ENCODE measurements at regions of chr2 and their contacts with region 1.

Region 1: DNA sequence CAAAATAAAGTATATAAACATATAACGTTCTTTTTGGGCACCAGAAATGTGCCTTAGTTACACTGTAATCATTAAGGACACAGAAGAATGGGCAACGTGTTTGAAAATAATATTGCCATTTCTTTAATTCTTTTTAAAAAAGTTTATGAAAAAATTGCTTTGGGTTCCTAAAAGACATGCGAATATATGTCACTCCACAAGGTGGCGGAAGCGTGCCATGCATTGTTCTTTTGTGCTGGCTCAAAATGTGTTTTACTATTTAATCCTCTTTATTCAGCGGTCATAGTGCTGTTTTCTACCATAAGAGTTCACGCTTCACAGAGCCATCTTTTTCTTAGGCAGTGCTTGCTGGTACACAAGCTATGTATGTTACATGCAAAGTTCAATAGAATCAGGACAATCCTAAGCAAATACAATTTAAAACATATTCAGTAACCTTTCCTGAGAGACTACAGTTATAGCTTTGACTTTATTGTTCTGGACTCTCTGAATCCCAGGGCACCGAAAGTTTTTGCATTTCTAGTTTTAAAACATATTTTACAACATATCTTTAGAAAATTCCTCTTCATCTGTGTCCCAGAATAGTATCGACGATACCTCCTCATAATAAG is 147.8 kb upstream of the ERBB4 start:
- DNase-seq: peak; percentile 33
- ATAC-seq: no peak
- H3K4me3 ChIP-seq: no peak overlapping the region
- H3K27ac ChIP-seq: no peak overlapping the region
- H3K4me1 ChIP-seq: no peaks in the 10 kb centered on the region
- H3K27me3 ChIP-seq: no peaks in the 10 kb centered on the region
- CTCF ChIP-seq: peak; percentile 85; the same call in 1 of the 2 replicates

Region 2: DNA sequence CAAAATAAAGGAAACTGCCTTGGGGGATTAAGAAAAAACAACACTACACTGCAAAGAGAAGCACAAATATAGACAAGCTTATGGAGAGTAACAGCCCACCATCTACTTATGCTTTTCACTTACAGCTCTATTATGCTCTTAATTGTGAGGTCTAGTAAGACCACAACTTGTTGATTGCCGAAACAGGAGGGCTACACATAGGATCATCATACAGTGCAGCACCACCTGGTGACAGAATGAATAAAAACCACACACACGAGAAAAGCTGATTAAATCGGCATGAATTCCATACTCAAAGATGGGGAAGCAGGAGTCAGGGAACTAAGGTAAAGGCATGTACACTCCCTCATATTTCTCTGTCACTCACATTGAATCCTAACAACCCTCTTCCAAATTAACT is 205.8 kb after region 1 on chr2:
- CTCF ChIA-PET with region 1: no interaction called
- POLR2A ChIA-PET with region 1: no interaction called
- in situ Hi-C with region 1: no loop called
- intact Hi-C with region 1: loop called (anchors 2 kb)
- DNase-seq: no peak
- ATAC-seq: no peak
- H3K4me3 ChIP-seq: no peak overlapping the region
- H3K27ac ChIP-seq: no peak overlapping the region
- H3K4me1 ChIP-seq: no peaks in the 10 kb centered on the region
- H3K27me3 ChIP-seq: no peaks in the 10 kb centered on the region
- CTCF ChIP-seq: peak; percentile 35

Region 3: DNA sequence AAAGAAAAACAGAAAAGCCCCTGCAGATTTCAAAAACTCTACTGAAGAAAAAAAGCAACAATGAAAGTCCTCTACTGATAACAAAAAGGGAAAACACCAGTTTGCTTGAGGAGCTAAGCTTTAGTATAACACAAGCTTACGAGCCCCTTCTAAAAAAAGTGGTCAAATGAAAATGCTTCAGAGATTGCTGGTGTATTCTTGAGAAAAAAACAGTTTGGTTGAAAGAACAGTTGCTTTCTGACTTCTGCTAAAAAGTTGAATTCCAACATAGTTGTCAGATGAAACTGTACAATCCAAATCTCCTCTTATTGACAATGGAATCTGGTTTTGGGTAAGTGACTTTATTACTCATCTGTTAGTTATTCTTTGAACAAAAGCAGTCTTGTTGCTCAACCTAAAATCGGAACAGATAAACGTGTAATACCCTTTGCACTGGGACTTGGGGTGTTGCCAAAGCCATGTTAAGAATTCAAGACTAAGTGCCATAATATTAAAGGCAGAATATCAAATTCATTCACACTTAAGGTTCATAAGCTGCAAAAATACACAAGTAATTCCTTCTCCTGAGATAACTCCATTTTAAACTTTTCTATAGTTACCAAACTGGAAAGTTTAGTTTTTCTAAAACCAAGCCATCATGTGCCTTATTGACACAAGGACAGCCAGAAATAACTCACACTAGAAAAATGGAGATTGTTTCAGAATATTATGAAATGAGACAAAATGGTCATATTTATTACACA is 552.5 kb after region 1 on chr2:
- CTCF ChIA-PET with region 1: no interaction called
- POLR2A ChIA-PET with region 1: no interaction called
- in situ Hi-C with region 1: no loop called
- intact Hi-C with region 1: loop called (anchors 10 kb)
- DNase-seq: no peak
- ATAC-seq: no peak
- H3K4me3 ChIP-seq: no peak overlapping the region
- H3K27ac ChIP-seq: no peak overlapping the region
- H3K4me1 ChIP-seq: no peaks in the 10 kb centered on the region
- H3K27me3 ChIP-seq: no peaks in the 10 kb centered on the region
- CTCF ChIP-seq: no peak

Measured in Panc1 (cell line).